ENCODE measurements at regions of chr5 and their contacts with region 1.

Region 1: GRCh38 chr5:78294248-78295034 is at the start of gene AP3B1:
- DNase-seq: peak; percentile 98 to 100
- H3K4me3 ChIP-seq: peak within 1 kb of the TSS; percentile 86 to 97
- H3K27ac ChIP-seq: peak within 1 kb of the TSS; percentile 84 to 87
- H3K4me1 ChIP-seq: peaks cover 0 to 11% of the 10 kb centered on the region in 2 donors
- H3K27me3 ChIP-seq: no peaks in the 10 kb centered on the region
- CTCF ChIP-seq: no peak
- total RNA-seq, gene AP3B1: 37.3 TPM

Region 2: GRCh38 chr5:78008356-78008967 is 286.0 kb before region 1 on chr5:
- intact Hi-C with region 1: loop called (anchors 1 kb)
- DNase-seq: no peak
- H3K4me3 ChIP-seq: no peak overlapping the region
- H3K27ac ChIP-seq: no peak overlapping the region
- H3K4me1 ChIP-seq: peaks cover 3 to 5% of the 10 kb centered on the region in 2 donors
- H3K27me3 ChIP-seq: no peaks in the 10 kb centered on the region
- CTCF ChIP-seq: peak in 2 of 3 experiments; percentile 70 to 74

Region 3: GRCh38 chr5:78204240-78204639 is 90.2 kb before region 1 on chr5:
- intact Hi-C with region 1: no loop called
- DNase-seq: no peak
- H3K4me3 ChIP-seq: no peak overlapping the region
- H3K27ac ChIP-seq: no peak overlapping the region
- H3K4me1 ChIP-seq: no peaks in the 10 kb centered on the region
- H3K27me3 ChIP-seq: no peaks in the 10 kb centered on the region
- CTCF ChIP-seq: no peak

Region 4: GRCh38 chr5:78359831-78360673 is 65.6 kb after region 1 on chr5 and contains the start of gene SCAMP1:
- intact Hi-C with region 1: loop called (anchors 1 kb)
- DNase-seq: peak; percentile 71 to 95
- H3K4me3 ChIP-seq: peak within 1 kb of the TSS; percentile 82 to 96
- H3K27ac ChIP-seq: peak within 1 kb of the TSS; percentile 86 to 90
- H3K4me1 ChIP-seq: peaks cover 0 to 17% of the 10 kb centered on the region in 2 donors
- H3K27me3 ChIP-seq: no peaks in the 10 kb centered on the region
- CTCF ChIP-seq: peak; percentile 30 to 63 (median 30)
- total RNA-seq, gene SCAMP1: 15.0 TPM

Region 5: DNA sequence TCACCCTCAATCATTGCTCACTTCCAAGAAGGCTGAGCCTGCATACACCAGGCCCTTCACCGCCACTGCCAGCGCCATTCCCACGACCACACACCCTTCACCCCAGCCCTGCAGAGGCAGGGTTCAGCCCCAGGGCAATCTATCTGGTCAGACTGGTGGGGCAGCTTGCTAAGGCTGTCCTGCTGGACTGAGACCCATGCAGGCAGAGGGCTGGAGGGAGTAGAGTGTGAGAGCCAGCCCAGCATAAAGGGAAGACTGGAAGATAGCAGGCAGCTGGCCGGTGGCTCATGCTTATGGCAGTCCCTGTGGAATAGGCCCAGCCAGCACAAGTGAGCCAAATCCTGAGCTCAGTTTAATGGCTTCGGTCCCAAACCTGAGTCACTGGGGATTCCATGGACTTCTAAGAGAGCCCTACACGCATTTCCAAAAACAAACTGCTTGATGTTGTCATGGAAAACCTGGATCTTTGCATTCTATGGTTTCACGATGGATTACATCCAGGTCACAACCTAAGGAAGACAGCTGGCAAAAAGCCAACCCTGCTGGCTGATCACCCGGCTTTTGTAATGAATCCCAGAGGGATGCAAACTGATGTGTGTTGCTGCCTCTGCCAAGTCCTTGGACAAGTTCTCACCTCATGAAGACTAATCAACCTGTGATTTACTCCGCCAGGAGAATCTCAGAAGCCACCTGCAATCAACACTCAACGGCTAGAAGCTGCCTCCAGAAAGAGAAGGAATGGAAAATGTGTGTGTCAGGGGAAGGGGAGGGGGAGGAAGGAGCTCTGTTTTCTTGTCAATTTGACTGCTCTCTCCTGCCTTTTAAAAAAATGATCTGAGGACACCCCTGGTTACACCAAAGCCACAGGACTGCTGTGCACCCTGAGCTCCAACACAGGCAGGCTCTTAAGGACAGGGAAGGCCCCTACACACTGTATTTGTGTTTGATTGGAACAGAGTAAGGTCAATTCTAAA is 210.6 kb after region 1 on chr5:
- intact Hi-C with region 1: loop called (anchors 2 kb)
- DNase-seq: peak; percentile 62 to 97
- H3K4me3 ChIP-seq: no peak overlapping the region
- H3K27ac ChIP-seq: peak overlapping the region; percentile 60 to 73
- H3K4me1 ChIP-seq: peaks cover 10 to 36% of the 10 kb centered on the region in 2 donors
- H3K27me3 ChIP-seq: no peaks in the 10 kb centered on the region
- CTCF ChIP-seq: no peak

Region 6: DNA sequence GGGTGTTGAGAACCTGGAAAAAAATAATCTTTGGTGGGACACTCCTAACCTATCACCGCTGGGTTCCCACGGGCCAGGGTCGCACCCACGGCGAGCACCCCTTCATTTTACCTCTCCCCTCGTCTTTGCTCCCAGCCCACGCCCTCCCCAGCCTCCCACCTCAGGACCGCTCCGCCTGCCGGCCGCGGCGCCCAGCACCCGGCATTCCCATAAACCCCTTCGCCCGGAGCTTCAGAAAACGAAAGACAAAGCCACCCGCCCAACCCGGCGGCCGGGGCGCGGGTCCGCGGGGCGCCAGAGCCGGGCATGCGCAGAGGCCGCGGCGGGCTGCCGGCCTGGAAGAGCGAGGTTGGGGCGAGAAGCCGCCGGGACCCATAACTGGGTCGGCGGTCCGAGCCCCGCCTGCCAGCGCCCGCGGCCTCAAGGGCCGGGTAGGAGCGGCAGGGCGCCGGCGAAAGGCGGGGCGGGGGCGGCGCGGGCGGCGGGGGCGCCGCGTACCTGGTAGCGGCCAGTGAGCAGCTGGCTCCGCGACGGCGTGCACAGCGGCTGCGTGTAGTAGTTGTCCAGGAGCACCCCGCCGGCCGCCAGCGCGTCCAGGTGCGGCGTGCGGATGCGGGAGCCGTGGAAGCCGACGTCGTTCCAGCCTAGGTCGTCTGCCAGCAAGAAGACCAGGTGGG is 690.1 kb after region 1 on chr5:
- intact Hi-C with region 1: loop called (anchors 10 kb)
- DNase-seq: peak; percentile 52 to 92
- H3K4me3 ChIP-seq: peak overlapping the region; percentile 89 to 95
- H3K27ac ChIP-seq: peak overlapping the region; percentile 96
- H3K4me1 ChIP-seq: peaks cover 0 to 12% of the 10 kb centered on the region in 2 donors
- H3K27me3 ChIP-seq: no peaks in the 10 kb centered on the region
- CTCF ChIP-seq: peak; percentile 28 to 48 (median 40)

Region 7: GRCh38 chr5:79235634-79236363 is 941.4 kb after region 1 on chr5 and contains the start of gene JMY:
- intact Hi-C with region 1: loop called (anchors 5 kb)
- DNase-seq: peak; percentile 74 to 90
- H3K4me3 ChIP-seq: peak within 1 kb of the TSS; percentile 70 to 91
- H3K27ac ChIP-seq: peak within 1 kb of the TSS; percentile 72 to 94
- H3K4me1 ChIP-seq: peaks cover 5 to 10% of the 10 kb centered on the region in 2 donors
- H3K27me3 ChIP-seq: no peaks in the 10 kb centered on the region
- CTCF ChIP-seq: peak in 2 of 3 experiments; percentile 8 to 17
- total RNA-seq, gene JMY: 5.2 TPM

Measured in ascending aorta (tissue), 2 donors.